IMR-90 (cell line): ENCODE measurements at regions of chr15 and their contacts with region 1.

Region 1: GRCh38 chr15:57340682-57341259 is 35.5 kb upstream of the CGNL1 start:
- DNase-seq: peak; percentile 65
- ATAC-seq: peak; percentile 91
- H3K4me3 ChIP-seq: no peak overlapping the region
- H3K27ac ChIP-seq: no peak overlapping the region
- H3K4me1 ChIP-seq: no peaks in the 10 kb centered on the region
- H3K27me3 ChIP-seq: peaks cover 2% of the 10 kb centered on the region; the same call in 1 of the 2 replicates
- CTCF ChIP-seq: peak; percentile 96
- POLR2A ChIP-seq: peak; percentile 47; the same call in 1 of the 2 replicates
- RAD21 ChIP-seq: peak; percentile 99

Region 2: DNA sequence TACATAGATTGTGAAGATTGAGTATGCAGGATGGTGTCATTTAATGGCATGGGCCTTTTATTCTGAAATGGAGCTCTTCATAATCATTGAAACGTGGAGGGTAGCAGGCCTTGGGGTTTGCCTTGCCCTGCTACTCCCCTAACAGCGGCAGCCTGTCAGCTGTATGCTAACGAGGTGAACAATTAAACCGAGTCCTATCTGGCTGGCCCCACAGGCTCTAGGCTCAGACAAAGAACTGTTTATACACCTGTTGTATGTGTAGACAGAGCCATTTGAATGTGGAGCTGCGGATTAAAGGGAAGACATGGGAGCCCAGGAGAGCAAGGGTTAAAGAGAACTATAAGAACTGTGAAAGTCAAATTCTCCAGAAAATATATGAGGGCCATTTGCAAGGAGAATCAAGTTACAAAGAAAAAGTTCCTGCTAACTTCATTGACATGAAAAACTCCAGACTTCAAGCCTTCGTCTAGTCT is 81.2 kb before region 1 on chr15:
- CTCF ChIA-PET with region 1: no interaction called
- POLR2A ChIA-PET with region 1: no interaction called
- dilution Hi-C with region 1: no loop called
- in situ Hi-C with region 1: no loop called
- intact Hi-C with region 1: no loop called
- DNase-seq: no peak
- ATAC-seq: peak; percentile 17; the same call in 1 of the 2 replicates
- H3K4me3 ChIP-seq: no peak overlapping the region
- H3K27ac ChIP-seq: peak overlapping the region; percentile 32; the same call in 1 of the 2 replicates
- H3K4me1 ChIP-seq: peaks cover 3% of the 10 kb centered on the region
- H3K27me3 ChIP-seq: no peaks in the 10 kb centered on the region
- CTCF ChIP-seq: no peak
- POLR2A ChIP-seq: no peak
- RAD21 ChIP-seq: no peak

Region 3: GRCh38 chr15:57521503-57521902 is 180.7 kb after region 1 on chr15:
- CTCF ChIA-PET with region 1: interaction called, 10 read pairs
- POLR2A ChIA-PET with region 1: no interaction called
- dilution Hi-C with region 1: loop called (anchors 25 kb)
- in situ Hi-C with region 1: loop called (anchors 5 kb)
- intact Hi-C with region 1: no loop called
- DNase-seq: no peak
- ATAC-seq: no peak
- H3K4me3 ChIP-seq: no peak overlapping the region
- H3K27ac ChIP-seq: no peak overlapping the region
- H3K4me1 ChIP-seq: no peaks in the 10 kb centered on the region
- H3K27me3 ChIP-seq: peaks cover 24% of the 10 kb centered on the region
- CTCF ChIP-seq: no peak
- POLR2A ChIP-seq: no peak
- RAD21 ChIP-seq: no peak

Region 4: GRCh38 chr15:57534281-57534680 is 193.5 kb after region 1 on chr15:
- CTCF ChIA-PET with region 1: interaction called, 74 read pairs
- POLR2A ChIA-PET with region 1: no interaction called
- dilution Hi-C with region 1: loop called (anchors 25 kb)
- in situ Hi-C with region 1: loop called (anchors 5 kb)
- intact Hi-C with region 1: no loop called
- DNase-seq: no peak
- ATAC-seq: no peak
- H3K4me3 ChIP-seq: no peak overlapping the region
- H3K27ac ChIP-seq: no peak overlapping the region
- H3K4me1 ChIP-seq: no peaks in the 10 kb centered on the region
- H3K27me3 ChIP-seq: peaks cover 27% of the 10 kb centered on the region
- CTCF ChIP-seq: no peak
- POLR2A ChIP-seq: no peak
- RAD21 ChIP-seq: no peak

Region 5: DNA sequence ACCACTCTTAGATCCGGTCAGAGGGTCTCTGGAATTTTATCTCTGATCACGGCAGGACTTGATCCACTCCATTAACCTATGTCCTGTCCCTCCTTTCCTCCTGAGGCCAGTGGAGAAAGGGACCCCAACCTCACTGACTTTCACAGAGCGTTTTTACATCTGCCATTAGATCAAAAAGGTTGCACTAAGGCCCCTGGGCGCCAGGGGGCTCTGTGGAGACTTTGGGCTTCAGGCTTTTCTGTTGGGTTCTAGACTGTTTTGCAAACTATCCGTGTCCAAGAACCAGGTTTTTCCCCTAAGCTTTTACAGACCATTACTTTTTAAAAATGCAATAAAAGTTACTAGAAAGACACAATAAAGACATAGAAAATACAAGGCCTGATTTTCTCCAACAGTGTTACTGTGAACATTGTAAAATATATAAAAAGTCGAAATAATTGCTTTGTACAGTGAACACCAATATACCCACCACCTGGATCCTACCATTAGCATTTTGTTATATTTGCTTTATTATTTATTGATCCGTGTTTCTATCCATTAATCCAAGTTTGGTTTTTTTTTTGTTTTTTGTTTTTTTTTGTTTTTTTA is 525.5 kb after region 1 on chr15:
- CTCF ChIA-PET with region 1: no interaction called
- POLR2A ChIA-PET with region 1: no interaction called
- dilution Hi-C with region 1: no loop called
- in situ Hi-C with region 1: no loop called
- intact Hi-C with region 1: loop called (anchors 10 kb)
- DNase-seq: peak; percentile 15
- ATAC-seq: peak; percentile 68; the same call in 1 of the 2 replicates
- H3K4me3 ChIP-seq: no peak overlapping the region
- H3K27ac ChIP-seq: no peak overlapping the region
- H3K4me1 ChIP-seq: no peaks in the 10 kb centered on the region
- H3K27me3 ChIP-seq: no peaks in the 10 kb centered on the region
- CTCF ChIP-seq: peak; percentile 63
- POLR2A ChIP-seq: no peak
- RAD21 ChIP-seq: peak; percentile 45